ENCODE measurements at regions of chr11 and their contacts with region 1.

Region 1: DNA sequence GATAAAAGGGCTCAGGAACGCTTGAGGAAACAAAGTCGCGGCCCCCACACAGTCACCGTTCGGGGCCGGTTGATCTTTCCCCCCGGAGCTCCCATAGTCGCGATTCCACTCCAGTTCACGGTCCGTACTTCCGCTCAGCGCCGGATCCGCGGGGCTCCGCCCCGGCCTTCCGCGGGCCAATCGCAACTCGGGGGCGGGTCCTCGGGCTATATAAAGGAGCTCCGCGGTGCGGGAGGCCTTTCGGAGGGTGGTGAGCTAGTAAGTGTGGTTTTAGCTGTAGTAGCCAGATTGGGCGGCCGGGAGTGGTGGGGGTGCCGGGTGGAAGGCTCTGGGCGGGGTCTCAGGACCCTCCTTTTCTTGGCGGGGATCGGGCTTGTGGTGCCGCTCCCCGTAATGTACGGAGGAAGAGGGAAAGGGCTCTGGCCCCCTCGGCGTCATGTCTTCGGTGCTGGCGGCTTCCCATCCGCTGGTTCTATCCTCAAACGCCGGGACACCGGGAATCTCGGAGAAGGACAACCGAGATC is at the starts of genes C11orf98 and CSKMT:
- DNase-seq: peak; percentile 91 to 97 (median 94)
- ATAC-seq: peak; percentile 87
- H3K4me3 ChIP-seq: peak within 1 kb of the TSS; percentile 73
- H3K27ac ChIP-seq: peak within 1 kb of the TSS; percentile 80
- H3K4me1 ChIP-seq: peaks cover 19 to 41% of the 10 kb centered on the region in 2 experiments; a peak in 4 of 5 replicates
- H3K27me3 ChIP-seq: no peaks in the 10 kb centered on the region
- CTCF ChIP-seq: no peak
- EP300 ChIP-seq: no peak
- POLR2A ChIP-seq: peak; percentile 100
- RAD21 ChIP-seq: peak in 1 of 2 experiments; percentile 8; a peak in 1 of 4 replicates
- polyA plus RNA-seq, gene C11orf98: 164 to 246 TPM
- polyA plus RNA-seq, gene CSKMT: 26.4 to 31.8 TPM

Region 2: DNA sequence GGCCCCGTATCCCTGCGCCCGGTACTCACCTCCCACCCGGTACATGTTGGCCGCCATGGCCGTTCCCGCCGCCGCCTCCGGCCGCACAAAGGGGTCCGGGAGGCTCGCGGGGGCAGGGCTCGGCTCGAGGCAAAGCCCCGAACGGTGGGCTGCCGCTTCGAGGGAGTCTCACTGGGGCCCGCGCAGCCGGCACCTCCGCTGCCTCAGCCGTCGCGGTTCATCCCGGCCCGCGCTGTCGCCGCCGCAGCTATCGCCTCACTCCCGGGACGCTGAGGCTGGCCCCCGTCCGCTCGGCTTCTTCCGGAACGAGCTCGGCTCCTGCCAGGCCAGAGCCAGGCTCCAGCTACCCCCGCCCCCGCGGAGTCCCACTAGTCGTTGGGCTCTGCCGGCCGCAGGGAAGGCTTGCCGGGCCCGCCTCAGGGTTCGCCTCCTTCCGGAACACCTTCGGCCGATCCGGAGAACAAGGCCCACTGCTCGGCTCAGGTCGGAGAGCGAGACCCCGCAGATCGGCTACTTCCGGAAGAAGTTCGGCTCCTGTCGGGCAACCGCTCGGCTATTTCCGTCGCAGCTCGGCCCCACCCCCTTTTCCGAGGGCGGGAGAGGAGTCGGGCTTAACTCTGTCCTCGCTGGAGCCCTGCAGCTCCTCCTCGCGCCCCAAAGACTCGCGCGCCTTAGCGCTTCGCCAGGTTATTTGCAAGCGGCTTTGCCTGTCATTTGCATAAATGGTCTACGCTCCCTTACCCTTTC is 63.6 kb before region 1 on chr11 and contains the start of gene MTA2:
- CTCF ChIA-PET with region 1: no interaction called
- POLR2A ChIA-PET with region 1: interaction called, 21 read pairs
- in situ Hi-C with region 1: no loop called
- intact Hi-C with region 1: loop called (anchors 5 kb)
- DNase-seq: peak; percentile 86 to 99 (median 91)
- ATAC-seq: peak; percentile 94
- H3K4me3 ChIP-seq: peak within 1 kb of the TSS; percentile 95
- H3K27ac ChIP-seq: peak within 1 kb of the TSS; percentile 97
- H3K4me1 ChIP-seq: peaks cover 14 to 43% of the 10 kb centered on the region in 2 experiments; a peak in 4 of 5 replicates
- H3K27me3 ChIP-seq: no peaks in the 10 kb centered on the region
- CTCF ChIP-seq: no peak; a peak in 1 of 6 replicates
- EP300 ChIP-seq: no peak
- POLR2A ChIP-seq: peak; percentile 81
- RAD21 ChIP-seq: no peak
- polyA plus RNA-seq, gene MTA2: 6.2 to 9.9 TPM

Region 3: DNA sequence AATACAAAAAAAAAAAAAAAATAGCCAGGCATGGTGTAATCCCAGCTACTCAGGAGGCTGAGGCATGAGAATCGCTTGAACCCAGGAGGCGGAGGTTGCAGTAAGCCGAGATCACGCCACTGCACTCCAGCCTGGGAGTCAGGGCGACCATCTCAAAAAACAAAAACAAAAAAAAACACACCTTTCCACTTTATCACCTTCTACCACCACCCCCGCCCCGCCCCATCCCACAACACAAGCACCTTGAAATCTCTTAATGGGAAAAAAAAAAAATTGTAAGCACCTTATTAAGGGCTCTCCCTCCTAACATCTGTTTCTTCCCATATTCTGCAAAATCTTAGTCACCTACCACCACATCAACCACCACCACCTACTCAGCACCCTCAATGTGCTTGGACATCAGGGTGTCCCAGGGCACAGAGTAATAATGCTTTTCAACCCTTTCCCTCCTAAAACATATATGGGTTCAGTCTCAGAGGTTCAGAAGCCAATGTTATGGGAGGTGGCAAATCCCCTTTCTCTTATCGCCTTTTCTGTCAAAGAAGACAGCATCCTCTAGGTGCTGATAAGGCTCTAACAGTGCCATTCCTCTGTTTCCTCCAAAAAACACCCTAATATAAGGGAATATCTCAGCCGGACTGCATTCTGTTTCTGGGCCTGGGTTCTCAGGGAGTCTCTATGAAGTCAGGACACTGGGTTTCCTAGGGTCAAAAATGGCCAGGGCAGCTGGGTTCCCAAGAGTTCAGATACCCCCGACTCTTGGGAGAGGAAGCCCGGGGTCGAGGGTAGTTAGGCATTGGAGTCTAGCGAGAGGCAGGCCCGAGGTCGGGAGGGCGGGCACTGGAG is 12.8 kb before region 1 on chr11:
- CTCF ChIA-PET with region 1: no interaction called
- POLR2A ChIA-PET with region 1: interaction called, 161 read pairs
- in situ Hi-C with region 1: no loop called
- intact Hi-C with region 1: loop called (anchors 2 kb)
- DNase-seq: peak in 3 of 4 experiments; percentile 11 to 31 (median 20)
- ATAC-seq: peak; percentile 33
- H3K4me3 ChIP-seq: peak overlapping the region; percentile 77
- H3K27ac ChIP-seq: peak overlapping the region; percentile 80
- H3K4me1 ChIP-seq: peaks cover 11 to 36% of the 10 kb centered on the region in 2 experiments; a peak in 4 of 5 replicates
- H3K27me3 ChIP-seq: no peaks in the 10 kb centered on the region
- CTCF ChIP-seq: no peak
- EP300 ChIP-seq: no peak
- POLR2A ChIP-seq: no peak
- RAD21 ChIP-seq: no peak

Region 4: GRCh38 chr11:62705880-62706849 is 41.0 kb after region 1 on chr11:
- CTCF ChIA-PET with region 1: no interaction called
- POLR2A ChIA-PET with region 1: interaction called, 19 read pairs
- in situ Hi-C with region 1: no loop called
- intact Hi-C with region 1: no loop called
- DNase-seq: peak; percentile 93 to 97 (median 96)
- ATAC-seq: peak; percentile 95
- H3K4me3 ChIP-seq: peak overlapping the region; percentile 72
- H3K27ac ChIP-seq: peak overlapping the region; percentile 82
- H3K4me1 ChIP-seq: peaks cover 29 to 42% of the 10 kb centered on the region in 2 experiments
- H3K27me3 ChIP-seq: no peaks in the 10 kb centered on the region
- CTCF ChIP-seq: no peak
- EP300 ChIP-seq: no peak
- POLR2A ChIP-seq: peak; percentile 79
- RAD21 ChIP-seq: no peak

Region 5: DNA sequence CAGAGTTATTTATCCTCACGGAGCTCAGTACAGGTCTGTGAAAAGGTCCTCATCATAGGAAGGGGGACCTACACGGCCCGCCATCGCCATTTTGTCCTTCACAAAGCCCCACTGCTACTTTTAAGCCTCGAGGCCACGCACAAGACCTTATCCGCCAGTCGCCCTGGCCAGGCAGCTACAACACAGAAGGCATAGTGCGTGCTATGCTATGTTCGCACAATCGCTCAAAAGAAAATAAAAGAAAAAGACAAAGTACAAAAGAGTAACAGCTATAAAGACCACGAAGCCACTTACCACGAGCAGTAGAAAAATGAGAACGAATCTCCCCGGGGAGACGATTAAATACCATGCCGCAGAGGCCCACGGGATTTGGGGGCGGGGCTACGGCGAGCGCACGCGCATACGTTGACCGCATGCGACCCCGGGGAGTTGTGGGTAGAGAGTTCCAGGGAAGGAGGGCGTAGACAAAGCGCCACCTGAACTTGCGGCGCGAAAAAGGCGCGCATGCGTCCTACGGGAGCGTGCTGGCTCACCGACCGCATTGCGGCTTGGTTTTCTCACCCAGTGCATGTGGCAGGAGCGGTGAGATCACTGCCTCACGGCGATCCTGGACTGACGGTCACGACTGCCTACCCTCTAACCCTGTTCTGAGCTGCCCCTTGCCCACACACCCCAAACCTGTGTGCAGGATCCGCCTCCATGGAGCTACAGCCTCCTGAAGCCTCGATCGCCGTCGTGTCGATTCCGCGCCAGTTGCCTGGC is 190.6 kb after region 1 on chr11:
- CTCF ChIA-PET with region 1: no interaction called
- POLR2A ChIA-PET with region 1: interaction called, 15 read pairs
- in situ Hi-C with region 1: no loop called
- intact Hi-C with region 1: no loop called
- DNase-seq: peak; percentile 92 to 99 (median 96)
- ATAC-seq: peak; percentile 77
- H3K4me3 ChIP-seq: peak overlapping the region; percentile 74
- H3K27ac ChIP-seq: peak overlapping the region; percentile 99
- H3K4me1 ChIP-seq: peaks cover 5 to 21% of the 10 kb centered on the region in 2 experiments; a peak in 3 of 5 replicates
- H3K27me3 ChIP-seq: no peaks in the 10 kb centered on the region
- CTCF ChIP-seq: no peak
- EP300 ChIP-seq: peak; percentile 38; the same call in 1 of the 2 replicates
- POLR2A ChIP-seq: peak; percentile 100
- RAD21 ChIP-seq: no peak; a peak in 1 of 4 replicates

Region 6: GRCh38 chr11:62909107-62909894 is 244.2 kb after region 1 on chr11:
- CTCF ChIA-PET with region 1: no interaction called
- POLR2A ChIA-PET with region 1: no interaction called
- in situ Hi-C with region 1: no loop called
- intact Hi-C with region 1: no loop called
- DNase-seq: peak; percentile 65 to 72 (median 70)
- ATAC-seq: peak; percentile 75
- H3K4me3 ChIP-seq: no peak overlapping the region
- H3K27ac ChIP-seq: no peak overlapping the region
- H3K4me1 ChIP-seq: peaks cover 6 to 18% of the 10 kb centered on the region in 2 experiments
- H3K27me3 ChIP-seq: peaks cover 2 to 18% of the 10 kb centered on the region in 2 experiments; a peak in 2 of 5 replicates
- CTCF ChIP-seq: peak; percentile 77 to 86 (median 84)
- EP300 ChIP-seq: no peak
- POLR2A ChIP-seq: no peak
- RAD21 ChIP-seq: peak; percentile 65 to 77

Measured in K562 (cell line).